A673 (cell line): ENCODE measurements at regions of chrX and their contacts with region 1.

Region 1: GRCh38 chrX:48597353-48598264 is at the start of gene WDR13:
- DNase-seq: peak; percentile 94
- H3K4me3 ChIP-seq: peak within 1 kb of the TSS; percentile 69
- H3K27ac ChIP-seq: peak within 1 kb of the TSS; percentile 96
- H3K4me1 ChIP-seq: no peaks in the 10 kb centered on the region
- H3K27me3 ChIP-seq: no peaks in the 10 kb centered on the region
- CTCF ChIP-seq: no peak
- total RNA-seq, gene WDR13: 48.1 and 58.7 TPM in 2 replicates

Region 2: DNA sequence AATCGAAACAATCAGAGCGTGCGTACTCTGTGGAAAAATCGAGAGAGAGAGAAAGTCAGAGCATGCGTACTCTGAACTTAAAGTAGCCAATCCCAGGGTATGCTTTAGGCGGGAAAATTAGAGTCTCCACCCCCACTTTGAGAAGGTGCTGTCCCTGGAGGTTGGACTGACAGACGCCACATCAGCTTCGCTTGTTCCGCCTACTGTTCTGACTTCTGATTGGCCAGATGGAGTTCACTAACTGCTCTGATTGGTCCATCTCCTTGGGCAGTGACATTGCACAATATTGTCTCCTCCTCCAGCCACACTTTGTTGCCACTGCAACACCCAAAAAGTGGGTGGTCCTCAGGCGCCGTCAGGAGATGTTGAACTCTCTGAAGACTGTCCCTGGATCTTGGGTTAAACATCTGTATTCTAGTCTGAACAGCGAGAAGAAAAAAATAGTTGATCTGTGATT is 400.8 kb before region 1 on chrX and contains the start of gene SSX5:
- CTCF ChIA-PET with region 1: no interaction called
- POLR2A ChIA-PET with region 1: no interaction called
- intact Hi-C with region 1: no loop called
- DNase-seq: no peak
- H3K4me3 ChIP-seq: no peak within 1 kb of the TSS
- H3K27ac ChIP-seq: no peak within 1 kb of the TSS
- H3K4me1 ChIP-seq: no peaks in the 10 kb centered on the region
- H3K27me3 ChIP-seq: no peaks in the 10 kb centered on the region
- CTCF ChIP-seq: no peak
- total RNA-seq, gene SSX5: not detected in 2 replicates

Region 3: GRCh38 chrX:48574270-48575266 is 23.0 kb before region 1 on chrX and contains the start of gene RBM3:
- CTCF ChIA-PET with region 1: no interaction called
- POLR2A ChIA-PET with region 1: interaction called, 16 read pairs
- intact Hi-C with region 1: no loop called
- DNase-seq: peak; percentile 96
- H3K4me3 ChIP-seq: peak within 1 kb of the TSS; percentile 71
- H3K27ac ChIP-seq: peak within 1 kb of the TSS; percentile 99
- H3K4me1 ChIP-seq: peaks cover 4% of the 10 kb centered on the region
- H3K27me3 ChIP-seq: no peaks in the 10 kb centered on the region
- CTCF ChIP-seq: peak; percentile 46
- total RNA-seq, gene RBM3: 259 and 260 TPM in 2 replicates

Region 4: DNA sequence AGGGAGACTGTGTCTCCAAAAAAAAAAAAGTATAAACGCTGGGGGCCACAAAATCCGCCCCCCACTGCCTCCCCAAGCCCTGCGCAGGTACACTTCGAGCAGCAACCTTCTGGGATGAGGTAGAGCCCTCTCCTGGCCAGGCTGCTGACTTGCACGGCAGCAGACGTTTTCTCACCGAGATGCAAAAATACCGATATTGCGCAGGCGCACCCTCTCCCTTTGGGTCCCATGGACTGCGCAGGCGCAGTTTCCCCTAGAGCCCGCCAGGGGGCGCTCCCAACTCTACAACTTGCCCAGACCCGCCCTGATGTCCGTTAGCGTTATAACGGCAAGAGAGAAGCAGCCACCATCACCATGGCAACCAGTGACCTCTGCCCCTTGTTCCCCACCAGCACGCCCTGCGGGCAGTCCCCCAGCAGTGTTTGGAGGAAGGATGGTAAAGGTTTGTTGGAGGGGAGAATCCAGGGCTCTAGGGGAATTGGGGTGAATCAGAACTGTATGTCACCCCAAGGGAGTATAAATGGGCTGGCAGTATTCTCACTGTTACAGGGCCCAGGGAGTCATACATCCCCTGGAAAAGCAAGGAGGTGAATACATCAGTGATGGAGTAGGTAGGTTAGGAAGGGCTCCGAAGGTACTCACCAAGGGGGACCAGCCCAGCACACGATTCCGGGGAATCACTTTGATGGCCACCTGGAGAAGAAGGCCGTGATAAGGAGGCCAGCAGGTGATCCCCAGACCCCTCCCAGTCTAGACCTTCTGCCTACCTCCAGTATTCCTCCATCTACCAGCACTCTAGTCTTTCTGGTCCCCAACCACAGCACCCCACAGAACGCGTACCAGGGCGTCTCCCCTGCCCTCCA is 319.8 kb after region 1 on chrX:
- CTCF ChIA-PET with region 1: no interaction called
- POLR2A ChIA-PET with region 1: no interaction called
- intact Hi-C with region 1: loop called (anchors 5 kb)
- DNase-seq: peak; percentile 90
- H3K4me3 ChIP-seq: peak overlapping the region; percentile 69
- H3K27ac ChIP-seq: peak overlapping the region; percentile 16
- H3K4me1 ChIP-seq: peaks cover 4% of the 10 kb centered on the region
- H3K27me3 ChIP-seq: no peaks in the 10 kb centered on the region
- CTCF ChIP-seq: peak; percentile 97

Region 5: DNA sequence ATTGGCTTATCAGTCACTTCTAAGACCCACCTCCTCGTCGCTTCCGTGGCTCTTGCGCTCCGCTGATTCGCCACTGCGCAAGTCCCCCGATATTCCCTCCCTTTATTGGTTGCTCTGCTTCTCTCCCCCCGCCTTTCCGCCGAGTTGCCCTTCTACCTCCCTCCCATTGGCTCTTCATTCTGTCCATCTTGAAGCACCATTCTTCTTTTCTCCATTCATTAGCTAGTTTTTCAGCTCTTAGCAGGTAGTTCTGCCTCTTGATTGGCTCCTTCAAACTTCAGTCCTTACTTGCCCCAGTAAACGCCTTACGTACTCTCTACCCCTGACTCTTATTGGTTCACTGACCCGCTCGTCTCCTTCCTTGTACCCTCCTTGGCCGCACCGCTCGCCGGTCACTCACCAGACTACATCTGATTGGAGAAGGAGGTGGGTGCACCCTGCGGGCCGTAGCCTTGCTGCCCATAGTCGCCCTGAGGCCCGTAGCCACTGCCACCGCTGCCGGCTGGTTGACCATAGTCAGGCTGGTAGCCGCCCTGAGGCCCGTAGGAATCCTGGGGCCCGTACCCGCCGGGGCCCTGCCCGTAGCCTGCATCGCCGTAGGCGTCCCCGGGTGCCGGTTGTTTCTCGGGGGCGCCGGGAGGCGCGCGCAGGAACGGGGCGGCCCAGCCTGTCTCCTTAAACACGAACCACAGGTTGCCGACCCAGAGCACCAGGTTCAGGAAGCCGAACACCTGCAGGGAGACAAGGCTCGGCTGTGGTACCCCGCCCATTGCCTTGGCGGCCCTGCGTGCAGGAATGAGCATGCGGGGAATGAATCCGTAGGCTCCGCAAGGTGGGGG is 593.6 kb after region 1 on chrX:
- CTCF ChIA-PET with region 1: no interaction called
- POLR2A ChIA-PET with region 1: no interaction called
- intact Hi-C with region 1: no loop called
- DNase-seq: peak; percentile 98
- H3K4me3 ChIP-seq: peak overlapping the region; percentile 61
- H3K27ac ChIP-seq: peak overlapping the region; percentile 83
- H3K4me1 ChIP-seq: no peaks in the 10 kb centered on the region
- H3K27me3 ChIP-seq: no peaks in the 10 kb centered on the region
- CTCF ChIP-seq: no peak